ENCODE measurements at regions of chr17 and their contacts with region 1.

Region 1: GRCh38 chr17:3738562-3739295 is 15.0 kb downstream of the HASPIN start:
- DNase-seq: no peak
- ATAC-seq: no peak
- H3K4me3 ChIP-seq: no peak overlapping the region
- H3K27ac ChIP-seq: no peak overlapping the region
- H3K4me1 ChIP-seq: no peaks in the 10 kb centered on the region
- H3K27me3 ChIP-seq: no peaks in the 10 kb centered on the region

Region 2: DNA sequence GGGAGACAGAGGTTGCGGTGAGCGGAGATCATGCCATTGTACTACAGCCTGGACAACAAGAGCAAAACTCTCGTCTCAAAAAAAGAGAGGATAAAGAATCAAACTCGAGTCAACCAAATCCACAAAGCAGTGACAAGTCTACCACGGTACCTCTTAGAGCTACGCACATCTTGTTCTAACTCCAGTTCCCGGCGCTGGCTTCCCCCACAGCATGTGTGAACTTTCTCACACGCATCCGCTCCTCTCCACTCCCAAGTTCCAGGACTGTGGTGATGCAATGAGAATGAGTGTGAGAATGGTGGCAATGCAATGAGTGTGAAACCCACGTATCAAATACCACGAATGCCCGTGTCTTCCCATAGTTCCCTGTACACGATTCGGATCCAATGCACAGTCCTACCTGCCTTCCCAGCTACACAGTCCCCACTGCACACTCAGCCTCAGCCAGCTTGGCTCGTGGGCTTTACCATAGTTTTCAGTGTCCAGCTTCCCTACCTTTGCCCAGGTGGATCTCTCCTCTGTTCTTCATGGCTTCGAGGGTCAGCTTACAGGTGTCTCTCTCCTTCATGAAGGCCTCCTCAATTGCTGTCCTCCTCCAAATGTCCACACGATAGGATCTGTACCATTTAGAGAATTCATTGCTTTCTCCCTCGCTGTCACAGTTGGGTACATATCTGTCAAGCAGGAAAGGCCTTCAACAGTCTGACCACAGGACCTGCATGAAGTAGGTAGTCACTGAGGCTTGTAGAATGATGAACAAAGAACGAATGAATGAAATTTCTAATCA is 33.6 kb before region 1 on chr17:
- intact Hi-C with region 1: no loop called
- DNase-seq: no peak
- ATAC-seq: no peak
- H3K4me3 ChIP-seq: no peak overlapping the region
- H3K27ac ChIP-seq: no peak overlapping the region
- H3K4me1 ChIP-seq: no peaks in the 10 kb centered on the region
- H3K27me3 ChIP-seq: no peaks in the 10 kb centered on the region

Region 3: GRCh38 chr17:3845621-3846441 is 107.1 kb after region 1 on chr17 and contains the start of gene NCBP3:
- intact Hi-C with region 1: loop called in 1 of 2 experiments (anchors 10 kb)
- DNase-seq: peak; percentile 92 to 96
- ATAC-seq: peak; percentile 99
- H3K4me3 ChIP-seq: peak within 1 kb of the TSS; percentile 92
- H3K27ac ChIP-seq: peak within 1 kb of the TSS; percentile 31 to 41
- H3K4me1 ChIP-seq: no peaks in the 10 kb centered on the region
- H3K27me3 ChIP-seq: no peaks in the 10 kb centered on the region
- total RNA-seq, gene NCBP3: 28.2 to 36.9 TPM

Measured in aorta (tissue), 5 donors.